ENCODE measurements at regions of chr4 and their contacts with region 1.

Region 1: DNA sequence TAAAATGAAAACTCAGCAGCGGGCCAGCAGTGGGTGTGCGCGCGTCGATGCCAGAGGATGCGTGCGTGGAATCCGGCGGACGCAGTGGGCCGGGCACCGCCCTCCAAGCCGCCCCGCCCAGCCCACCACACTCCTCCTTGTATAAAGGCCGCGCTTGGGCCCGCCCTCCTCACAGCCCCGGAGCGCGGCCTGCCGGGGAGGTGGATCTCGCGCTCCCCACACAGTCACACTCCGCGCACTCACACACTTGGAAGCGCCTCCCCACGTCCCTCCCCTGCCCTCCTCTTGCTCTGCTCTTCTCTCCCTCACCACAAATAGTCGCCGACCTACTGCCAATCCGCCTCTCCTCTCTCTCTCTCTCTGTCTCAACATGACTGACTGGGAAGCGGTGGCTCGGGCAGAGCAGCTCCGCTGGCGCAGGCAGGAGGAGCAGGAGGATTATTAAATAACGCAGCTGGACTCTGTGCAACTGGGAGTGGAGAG is at the start of gene CCSER1:
- DNase-seq: peak; percentile 40 to 95 (median 69)

Region 2: GRCh38 chr4:89724716-89725115 is 402.5 kb before region 1 on chr4:
- intact Hi-C with region 1: no loop called
- DNase-seq: no peak

Region 3: GRCh38 chr4:89868999-89869589 is 258.2 kb before region 1 on chr4:
- intact Hi-C with region 1: no loop called
- DNase-seq: no peak

Region 4: GRCh38 chr4:90081432-90082144 is 45.7 kb before region 1 on chr4:
- intact Hi-C with region 1: no loop called
- DNase-seq: no peak

Region 5: DNA sequence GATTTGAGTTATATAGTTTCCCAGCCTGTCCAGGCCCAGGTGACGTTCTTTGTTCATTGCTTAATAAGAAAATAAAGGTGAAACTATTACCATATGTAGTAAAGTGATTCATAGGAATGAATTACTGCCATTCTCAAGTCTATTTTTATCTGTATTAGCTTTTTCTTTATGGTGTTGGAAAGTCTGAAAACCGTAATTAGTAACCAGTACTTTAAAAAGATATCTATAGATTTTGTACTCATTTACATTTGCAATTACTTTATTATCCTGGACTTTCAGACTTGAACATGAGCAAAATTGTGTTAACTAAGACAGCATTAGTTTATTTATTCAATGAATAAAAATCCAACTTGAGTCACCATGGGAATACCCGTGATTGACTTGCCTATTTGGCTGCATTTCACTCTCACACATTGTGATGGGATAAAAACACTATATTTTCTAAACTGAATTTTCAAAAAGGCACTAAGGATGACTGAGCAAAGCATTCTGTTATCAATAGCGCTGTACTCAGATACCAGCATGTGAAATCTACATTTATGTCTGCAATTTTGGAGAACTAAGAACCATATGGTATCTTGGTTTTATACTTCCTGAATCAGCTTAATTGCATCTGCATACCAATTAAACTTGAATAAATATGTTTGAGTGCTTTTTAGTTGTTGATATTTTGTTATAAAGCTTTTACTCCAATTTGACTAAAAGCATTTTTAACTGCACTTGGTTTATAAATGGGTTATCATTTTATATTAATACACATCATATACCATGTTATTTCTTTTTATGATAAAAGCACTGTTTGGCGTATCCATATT is 154.5 kb after region 1 on chr4:
- intact Hi-C with region 1: loop called (anchors 10 kb)
- DNase-seq: no peak

Region 6: DNA sequence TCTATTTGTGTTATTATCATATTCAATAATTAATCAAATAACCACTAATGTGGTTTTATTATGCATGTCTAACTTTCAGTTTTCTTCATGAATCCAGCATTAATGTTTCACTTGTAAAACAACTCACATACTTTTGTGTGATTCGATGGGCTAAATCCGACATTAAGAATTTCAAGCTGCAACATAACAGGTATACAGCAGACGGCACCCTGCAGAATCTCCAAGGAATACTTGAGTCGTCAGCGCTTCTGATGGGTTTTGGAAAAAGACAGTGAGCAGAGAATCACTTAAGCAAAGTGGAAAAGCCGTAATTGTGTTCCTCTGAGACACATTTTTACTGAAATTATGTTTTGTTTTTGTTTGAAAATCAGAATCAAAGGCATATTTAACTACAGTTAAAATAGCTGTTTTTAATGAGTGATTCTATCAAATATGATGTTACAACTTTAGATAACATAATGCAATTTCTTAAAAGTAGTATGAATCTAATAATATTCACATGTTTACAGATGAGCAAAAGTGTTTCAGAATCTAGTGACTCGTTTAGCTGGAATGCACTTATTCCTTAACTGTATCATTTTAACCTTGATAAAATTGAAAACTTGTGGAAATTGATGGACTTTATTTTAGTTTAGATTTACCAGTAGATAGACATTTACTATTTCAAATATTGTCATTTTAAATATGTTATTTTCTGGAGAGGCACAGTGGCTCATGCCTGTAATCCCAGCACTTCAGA is 514.8 kb after region 1 on chr4:
- intact Hi-C with region 1: no loop called
- DNase-seq: no peak